ENCODE measurements at regions of chr10 and their contacts with region 1.

Region 1: DNA sequence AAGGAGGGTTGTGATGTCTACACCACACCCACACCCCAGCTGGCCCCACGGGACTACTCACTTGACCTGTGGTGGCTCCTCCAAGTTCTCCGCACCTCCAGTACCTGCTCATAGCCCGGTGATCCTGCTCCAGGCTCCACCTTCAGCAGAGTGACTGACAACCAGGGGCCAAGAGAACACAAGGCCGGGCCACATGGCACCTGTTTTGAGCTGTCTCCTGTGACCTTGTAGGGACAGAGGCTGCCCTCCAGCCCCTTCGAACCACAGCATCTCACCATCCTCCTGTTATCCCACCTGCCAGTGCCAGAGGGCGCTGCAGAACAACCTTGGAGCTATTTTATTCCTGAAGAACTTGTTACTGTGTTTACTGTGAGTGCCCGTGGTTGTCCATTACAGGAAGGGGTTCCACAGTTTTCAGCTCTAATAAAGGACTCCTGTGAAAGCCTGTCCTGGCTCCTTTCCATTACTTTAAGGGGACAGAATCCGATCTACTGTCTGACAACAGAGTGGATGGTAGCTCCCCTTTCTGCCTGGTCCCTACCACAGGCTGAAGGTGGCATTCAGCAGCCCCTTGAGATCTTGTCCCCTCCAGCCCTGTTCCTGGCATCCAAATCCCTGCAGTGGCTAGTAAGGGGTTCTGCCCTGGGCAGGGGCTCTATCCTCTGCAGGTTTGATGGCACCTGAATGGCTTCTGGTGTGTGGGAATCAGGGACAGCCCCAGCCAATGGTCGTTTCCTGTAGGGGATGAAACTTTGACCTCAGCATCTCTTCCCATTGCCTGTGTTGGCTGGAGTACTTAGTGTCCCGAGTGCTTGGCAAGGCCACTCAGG is 50.8 kb downstream of the C10orf120 start:
- DNase-seq: peak; percentile 76
- ATAC-seq: peak; percentile 84

Region 2: GRCh38 chr10:121974535-121975294 is 674.1 kb before region 1 on chr10 and contains the start of gene NSMCE4A:
- intact Hi-C with region 1: no loop called
- DNase-seq: peak; percentile 90
- ATAC-seq: peak; percentile 95
- total RNA-seq, gene NSMCE4A: 30.3 TPM

Region 3: DNA sequence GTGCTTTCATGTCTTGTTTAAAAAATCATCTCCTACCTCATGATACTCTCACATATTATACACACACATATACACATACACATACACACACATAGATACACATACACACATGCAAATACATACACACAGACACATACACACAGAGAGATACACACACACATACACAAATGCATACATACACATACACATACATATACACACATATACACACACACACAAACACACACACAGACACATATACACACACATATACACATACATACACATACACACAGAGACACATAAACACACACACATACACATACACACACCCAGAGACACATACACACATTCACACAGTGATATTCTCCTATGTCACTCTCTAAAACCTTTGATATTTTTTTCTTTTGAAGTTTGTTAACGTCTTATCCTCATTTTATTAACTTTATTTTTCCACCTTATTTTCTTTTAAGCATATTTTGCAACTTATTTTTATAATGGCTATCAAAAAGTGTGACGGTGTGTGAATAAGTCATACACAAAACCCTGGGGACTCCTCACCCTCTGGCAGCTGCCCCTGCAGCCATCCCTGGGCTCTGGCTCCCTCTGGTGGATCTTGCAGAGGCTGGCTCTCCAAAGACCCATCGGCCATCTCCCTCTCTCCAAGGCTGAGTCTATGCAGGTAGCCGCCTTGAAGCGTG is 54.8 kb after region 1 on chr10:
- intact Hi-C with region 1: loop called (anchors 5 kb)
- DNase-seq: peak; percentile 83
- ATAC-seq: peak; percentile 97

Measured in left ventricle myocardium superior (tissue), 1 donor.